CD8-positive, alpha-beta memory T cell (primary cell): ENCODE measurements at regions of chr9 and their contacts with region 1.

Region 1: DNA sequence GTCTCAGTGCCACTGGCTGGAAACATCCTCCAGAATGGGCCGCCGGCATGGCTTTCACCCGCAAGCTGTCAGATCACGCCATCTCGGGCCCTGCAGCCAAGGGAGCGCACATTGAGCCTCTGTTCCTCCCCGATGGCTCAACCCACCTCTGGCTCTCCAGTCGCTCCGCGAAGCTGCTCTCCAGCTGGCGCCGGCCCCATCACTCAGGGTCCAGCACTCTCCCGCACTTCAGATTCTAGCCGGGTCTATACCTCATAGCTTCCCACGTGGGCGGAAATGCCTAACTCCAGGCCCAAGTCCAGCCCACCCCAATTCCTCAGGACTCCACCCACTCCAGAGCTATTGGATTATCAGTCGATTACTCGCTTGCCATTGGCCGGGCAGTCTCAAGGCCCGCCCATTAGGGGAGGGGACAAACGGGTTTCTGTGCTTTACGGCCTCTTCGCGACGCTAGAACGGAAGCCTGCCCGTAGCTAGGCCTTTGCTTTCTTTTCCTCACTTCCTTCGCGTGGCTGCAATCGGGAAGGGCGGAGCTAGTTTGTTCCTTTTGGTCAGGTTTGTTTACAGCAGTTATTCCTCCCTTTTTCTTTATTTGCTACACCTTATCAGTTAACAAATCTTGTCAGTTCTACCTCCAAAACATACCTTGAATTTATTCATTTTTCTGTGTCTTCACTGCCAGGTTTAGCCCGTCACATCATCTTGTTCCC is at the start of gene NOL6:
- DNase-seq: peak; percentile 94 to 99 (median 98)
- H3K4me3 ChIP-seq: peak within 1 kb of the TSS; percentile 76
- H3K4me3 Mint-ChIP-seq: peak within 1 kb of the TSS; percentile 88 to 100 (median 99)
- H3K27ac ChIP-seq: peak within 1 kb of the TSS; percentile 45
- H3K27ac Mint-ChIP-seq: peak within 1 kb of the TSS; percentile 64 to 99 (median 97)
- H3K4me1 ChIP-seq: peaks cover 22% of the 10 kb centered on the region
- H3K4me1 Mint-ChIP-seq: peaks cover 26 to 32% (median 31%) of the 10 kb centered on the region in 3 donors
- H3K27me3 ChIP-seq: no peaks in the 10 kb centered on the region
- H3K27me3 Mint-ChIP-seq: no peaks in the 10 kb centered on the region
- total RNA-seq, gene NOL6: 90.8 to 93.0 TPM

Region 2: DNA sequence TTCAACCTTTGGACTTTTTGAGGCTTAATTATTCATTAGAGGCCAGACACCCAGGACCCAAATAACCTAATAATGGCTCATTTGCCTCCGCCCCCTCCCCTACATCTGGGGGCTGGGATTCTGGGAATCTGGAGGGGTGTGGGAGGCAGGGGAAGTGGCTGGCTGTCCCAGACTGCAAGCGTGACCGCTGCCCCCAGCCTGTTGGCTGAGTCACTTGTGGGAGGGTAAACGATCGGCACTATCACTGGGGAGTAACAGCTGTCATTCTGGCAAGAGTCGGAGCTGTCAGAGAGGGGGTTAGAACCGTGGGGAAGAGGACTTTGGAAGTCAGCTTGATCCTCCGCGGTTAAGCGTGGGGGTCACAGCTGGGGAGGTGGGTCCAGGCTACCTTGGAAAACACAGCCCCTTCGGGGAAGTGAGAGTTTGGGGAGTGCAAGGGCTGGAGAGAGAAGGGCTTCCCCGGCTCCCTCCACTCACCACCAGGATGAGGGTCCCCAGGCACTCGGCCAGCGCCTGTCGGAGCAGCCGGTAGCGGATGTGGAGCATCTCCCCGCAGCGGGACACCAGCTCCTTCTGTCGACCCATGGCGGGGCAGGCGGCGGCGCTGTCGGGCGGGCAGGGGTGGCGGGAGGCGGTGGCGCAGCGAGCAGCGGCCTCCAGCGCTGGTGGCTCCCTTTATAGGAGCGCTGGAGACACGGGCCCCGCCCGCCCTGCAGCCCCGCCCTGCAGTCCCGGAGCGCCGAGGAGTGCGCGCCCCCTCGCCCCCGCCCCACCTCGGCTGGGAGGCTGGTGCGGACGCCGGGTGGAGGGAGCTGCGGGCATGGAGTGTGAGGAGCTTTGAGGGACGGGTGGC is 26.6 kb before region 1 on chr9 and contains the start of gene AQP3:
- CTCF ChIA-PET with region 1: interaction called, 202 read pairs
- POLR2A ChIA-PET with region 1: interaction called, 7 read pairs
- DNase-seq: peak; percentile 51 to 80 (median 72)
- H3K4me3 ChIP-seq: peak within 1 kb of the TSS; percentile 99
- H3K4me3 Mint-ChIP-seq: peak within 1 kb of the TSS; percentile 85 to 99 (median 88)
- H3K27ac ChIP-seq: peak within 1 kb of the TSS; percentile 86
- H3K27ac Mint-ChIP-seq: peak within 1 kb of the TSS; percentile 87 to 100 (median 97)
- H3K4me1 ChIP-seq: peaks cover 35% of the 10 kb centered on the region
- H3K4me1 Mint-ChIP-seq: peaks cover 38 to 62% (median 47%) of the 10 kb centered on the region in 3 donors
- H3K27me3 ChIP-seq: no peaks in the 10 kb centered on the region
- H3K27me3 Mint-ChIP-seq: no peaks in the 10 kb centered on the region
- total RNA-seq, gene AQP3: 8.7 to 9.3 TPM

Region 3: DNA sequence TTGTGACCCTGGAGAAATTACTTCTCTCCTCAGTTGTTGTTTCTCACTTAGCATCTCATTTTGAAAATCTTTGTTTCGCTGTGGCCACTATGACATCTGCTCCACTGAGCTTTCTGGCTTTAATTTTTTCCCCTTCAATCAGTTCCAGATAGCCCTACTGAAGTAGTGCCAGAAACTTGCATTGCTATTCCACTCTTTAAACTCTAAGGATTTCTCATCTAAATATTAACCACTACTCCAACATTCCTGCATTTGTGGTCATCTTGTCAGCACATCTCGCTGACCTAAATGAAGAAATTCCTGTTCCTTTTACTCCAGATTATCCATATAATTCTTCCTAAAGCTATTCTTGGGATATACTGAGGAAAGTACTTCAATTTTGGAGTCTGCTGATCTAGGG is 15.3 kb after region 1 on chr9:
- CTCF ChIA-PET with region 1: no interaction called
- POLR2A ChIA-PET with region 1: no interaction called
- DNase-seq: no peak
- H3K4me3 ChIP-seq: no peak overlapping the region
- H3K4me3 Mint-ChIP-seq: no peak overlapping the region
- H3K27ac ChIP-seq: no peak overlapping the region
- H3K27ac Mint-ChIP-seq: no peak overlapping the region
- H3K4me1 ChIP-seq: no peaks in the 10 kb centered on the region
- H3K4me1 Mint-ChIP-seq: peaks cover 0 to 6% (median 3%) of the 10 kb centered on the region in 3 donors
- H3K27me3 ChIP-seq: no peaks in the 10 kb centered on the region
- H3K27me3 Mint-ChIP-seq: peaks cover 1 to 5% of the 10 kb centered on the region in 2 donors